Activated CD4-positive, alpha-beta T cell treated with anti-CD3 and anti-CD28 coated beads, Interleukin-2, amount 10 ng/mL, durations not matched to agents 24 days and 14 days (primary cell): ENCODE measurements at regions of chr11 and their contacts with region 1.

Region 1: DNA sequence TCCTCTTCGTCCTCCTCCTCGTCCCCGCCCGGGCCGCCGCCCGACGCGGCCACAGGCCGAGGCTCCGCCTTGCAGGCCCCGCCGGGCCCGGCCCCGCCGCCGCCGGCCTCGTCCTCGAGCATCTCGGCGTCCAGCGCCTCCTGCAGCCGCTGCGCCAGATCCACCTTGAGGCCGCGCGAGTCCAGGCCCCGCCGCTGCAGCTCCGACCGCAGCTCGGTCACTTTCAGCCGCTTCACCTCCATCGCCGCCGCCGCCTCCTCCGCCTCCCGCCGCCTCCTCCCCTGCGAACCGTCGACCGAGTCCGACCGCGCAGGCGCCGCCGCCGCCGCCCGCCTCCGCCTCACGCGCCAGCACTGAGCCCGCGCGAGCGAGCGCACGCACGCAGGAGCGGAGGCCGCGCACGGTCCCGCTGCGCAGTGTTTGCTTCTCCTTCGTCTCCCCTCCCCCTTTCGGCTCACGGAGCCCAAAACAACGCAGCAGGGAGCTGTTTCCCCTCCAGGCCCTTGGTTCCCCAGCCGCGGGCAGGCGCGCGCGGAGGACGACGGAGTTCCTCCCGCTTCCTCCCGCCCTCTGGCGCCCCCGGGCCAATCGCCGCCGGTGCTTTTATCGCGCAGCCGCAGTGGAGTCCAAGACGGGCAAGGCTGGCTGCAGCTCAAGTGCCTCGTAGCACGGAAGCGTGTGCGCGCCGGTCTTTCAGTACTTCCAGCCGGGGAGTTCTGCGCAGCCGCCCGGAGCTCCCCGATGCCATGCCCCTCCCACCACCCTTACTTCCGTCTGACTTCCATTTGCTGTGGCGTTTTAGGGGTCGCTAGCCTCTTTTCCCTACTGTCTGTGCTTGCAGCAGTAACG is at the start of gene HNRNPUL2:
- DNase-seq: peak; percentile 100
- H3K4me3 Mint-ChIP-seq: peak within 1 kb of the TSS; percentile 93
- H3K27ac Mint-ChIP-seq: peak within 1 kb of the TSS; percentile 99
- H3K4me1 Mint-ChIP-seq: peaks cover 38% of the 10 kb centered on the region
- H3K27me3 Mint-ChIP-seq: peaks cover 2% of the 10 kb centered on the region
- total RNA-seq, gene HNRNPUL2: 60.5 and 60.6 TPM in 2 replicates

Region 2: GRCh38 chr11:62601394-62602140 is 125.6 kb before region 1 on chr11 and contains the start of gene MTA2:
- intact Hi-C with region 1: loop called (anchors 2 kb)
- DNase-seq: peak; percentile 100
- H3K4me3 Mint-ChIP-seq: peak within 1 kb of the TSS; percentile 95
- H3K27ac Mint-ChIP-seq: peak within 1 kb of the TSS; percentile 88
- H3K4me1 Mint-ChIP-seq: peaks cover 44% of the 10 kb centered on the region
- H3K27me3 Mint-ChIP-seq: no peaks in the 10 kb centered on the region
- total RNA-seq, gene MTA2: 219 and 220 TPM in 2 replicates

Region 3: GRCh38 chr11:62671575-62672389 is 55.4 kb before region 1 on chr11 and contains the starts of genes LBHD1 and UQCC3:
- intact Hi-C with region 1: loop called (anchors 5 kb)
- DNase-seq: peak; percentile 94
- H3K4me3 Mint-ChIP-seq: peak within 1 kb of the TSS; percentile 88
- H3K27ac Mint-ChIP-seq: peak within 1 kb of the TSS; percentile 92
- H3K4me1 Mint-ChIP-seq: peaks cover 38% of the 10 kb centered on the region
- H3K27me3 Mint-ChIP-seq: no peaks in the 10 kb centered on the region
- total RNA-seq, gene LBHD1: 21.5 and 23.0 TPM in 2 replicates
- total RNA-seq, gene UQCC3: 8.6 and 9.4 TPM in 2 replicates

Region 4: DNA sequence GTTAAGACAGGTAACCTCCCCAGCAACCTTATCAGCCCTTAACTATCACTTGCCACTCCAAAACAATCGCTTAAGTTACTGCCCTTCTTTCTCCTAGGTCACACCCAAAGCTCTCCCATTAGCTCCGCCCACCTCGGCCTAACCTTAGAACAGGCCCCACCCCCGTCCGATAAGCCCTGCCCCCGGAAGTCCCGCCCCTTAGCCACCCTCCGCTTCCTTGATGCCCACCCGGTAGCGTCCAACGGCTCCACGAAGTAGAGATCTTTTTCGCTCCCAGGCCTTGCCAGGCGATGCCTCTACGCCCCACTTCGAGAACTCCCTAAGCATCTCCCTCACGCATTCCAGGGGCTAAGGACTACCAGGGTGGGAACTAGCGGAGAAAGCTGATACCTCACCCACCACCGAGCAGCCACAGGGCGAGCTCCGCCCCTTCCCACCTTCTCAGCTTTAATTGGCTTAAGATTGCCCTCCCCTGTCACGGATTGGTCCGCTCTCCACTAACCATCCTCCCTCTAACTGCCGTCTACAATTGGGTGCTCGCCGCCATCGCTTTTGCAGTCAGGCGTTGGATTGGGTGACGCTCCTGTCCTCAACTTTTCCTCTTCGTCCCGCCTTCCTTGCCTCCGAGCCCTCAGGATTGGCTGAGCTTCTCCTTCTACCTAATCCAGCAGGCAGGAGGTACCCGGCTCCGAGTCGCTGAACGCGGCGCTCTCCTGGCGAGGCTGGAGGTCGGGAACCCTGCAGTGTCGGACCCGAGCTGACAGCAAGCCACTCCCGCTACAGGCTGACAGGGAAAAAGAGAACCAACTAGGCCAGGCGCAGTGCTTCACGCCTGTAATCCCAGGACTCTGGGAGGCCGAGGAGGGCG is 26.8 kb after region 1 on chr11 and contains the start of gene ZBTB3:
- intact Hi-C with region 1: loop called (anchors 1 kb)
- DNase-seq: peak; percentile 98
- H3K4me3 Mint-ChIP-seq: peak within 1 kb of the TSS; percentile 98
- H3K27ac Mint-ChIP-seq: peak within 1 kb of the TSS; percentile 97
- H3K4me1 Mint-ChIP-seq: peaks cover 16% of the 10 kb centered on the region
- H3K27me3 Mint-ChIP-seq: no peaks in the 10 kb centered on the region
- total RNA-seq, gene ZBTB3: 7.5 and 11.1 TPM in 2 replicates

Region 5: GRCh38 chr11:62787005-62787759 is 60.0 kb after region 1 on chr11 and contains the start of gene TMEM179B:
- intact Hi-C with region 1: loop called (anchors 1 kb)
- DNase-seq: peak; percentile 99
- H3K4me3 Mint-ChIP-seq: peak within 1 kb of the TSS; percentile 93
- H3K27ac Mint-ChIP-seq: peak within 1 kb of the TSS; percentile 92
- H3K4me1 Mint-ChIP-seq: peaks cover 37% of the 10 kb centered on the region
- H3K27me3 Mint-ChIP-seq: no peaks in the 10 kb centered on the region
- total RNA-seq, gene TMEM179B: 32.9 and 36.3 TPM in 2 replicates

Region 6: GRCh38 chr11:62841361-62842184 is 114.4 kb after region 1 on chr11:
- intact Hi-C with region 1: loop called (anchors 5 kb)
- DNase-seq: peak; percentile 95
- H3K4me3 Mint-ChIP-seq: no peak overlapping the region
- H3K27ac Mint-ChIP-seq: no peak overlapping the region
- H3K4me1 Mint-ChIP-seq: peaks cover 26% of the 10 kb centered on the region
- H3K27me3 Mint-ChIP-seq: no peaks in the 10 kb centered on the region